ENCODE measurements at regions of chr2 and their contacts with region 1.

Region 1: GRCh38 chr2:15965564-15966019 is 25.2 kb downstream of the MYCN start:
- DNase-seq: peak; percentile 79
- H3K4me3 Mint-ChIP-seq: no peak overlapping the region
- H3K27ac Mint-ChIP-seq: peak overlapping the region; percentile 49
- H3K4me1 Mint-ChIP-seq: peaks cover 49% of the 10 kb centered on the region
- H3K27me3 Mint-ChIP-seq: peaks cover 2% of the 10 kb centered on the region

Region 2: GRCh38 chr2:16012619-16013358 is 47.2 kb after region 1 on chr2:
- CTCF ChIA-PET with region 1: no interaction called
- POLR2A ChIA-PET with region 1: no interaction called
- intact Hi-C with region 1: loop called (anchors 1 kb)
- DNase-seq: no peak
- H3K4me3 Mint-ChIP-seq: no peak overlapping the region
- H3K27ac Mint-ChIP-seq: no peak overlapping the region
- H3K4me1 Mint-ChIP-seq: peaks cover 8% of the 10 kb centered on the region
- H3K27me3 Mint-ChIP-seq: peaks cover 33% of the 10 kb centered on the region

Region 3: GRCh38 chr2:16142383-16143361 is 177.1 kb after region 1 on chr2:
- CTCF ChIA-PET with region 1: no interaction called
- POLR2A ChIA-PET with region 1: no interaction called
- intact Hi-C with region 1: loop called (anchors 2 kb)
- DNase-seq: peak; percentile 11
- H3K4me3 Mint-ChIP-seq: no peak overlapping the region
- H3K27ac Mint-ChIP-seq: no peak overlapping the region
- H3K4me1 Mint-ChIP-seq: no peaks in the 10 kb centered on the region
- H3K27me3 Mint-ChIP-seq: no peaks in the 10 kb centered on the region